Activated B cell treated with CpG ODN at 0.5 μM for 24 hours (primary cell): ENCODE measurements at regions of chr10 and their contacts with region 1.

Region 1: DNA sequence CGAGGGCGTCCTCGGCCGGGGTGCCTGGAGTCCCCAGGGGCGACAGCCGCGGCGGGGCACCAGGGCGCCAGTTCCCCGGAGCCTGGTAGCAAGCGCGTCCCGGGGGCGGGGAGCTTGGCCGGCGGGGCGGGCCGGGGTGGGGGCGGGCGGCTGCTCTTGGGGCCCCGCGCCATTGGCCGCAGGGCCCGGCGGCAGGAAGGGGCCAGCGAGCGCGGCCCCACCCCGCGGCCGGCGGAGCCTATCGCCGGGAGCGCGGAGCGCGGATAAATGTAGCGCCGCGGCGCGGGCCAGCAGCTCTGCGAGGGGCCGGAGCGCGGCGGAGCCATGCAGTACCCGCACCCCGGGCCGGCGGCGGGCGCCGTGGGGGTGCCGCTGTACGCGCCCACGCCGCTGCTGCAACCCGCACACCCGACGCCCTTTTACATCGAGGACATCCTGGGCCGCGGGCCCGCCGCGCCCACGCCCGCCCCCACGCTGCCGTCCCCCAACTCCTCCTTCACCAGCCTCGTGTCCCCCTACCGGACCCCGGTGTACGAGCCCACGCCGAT is at the start of gene HHEX:
- DNase-seq: peak; percentile 79
- ATAC-seq: peak; percentile 75
- H3K4me3 Mint-ChIP-seq: peak within 1 kb of the TSS; percentile 86
- H3K27ac Mint-ChIP-seq: peak within 1 kb of the TSS; percentile 92
- H3K4me1 Mint-ChIP-seq: peaks cover 45% of the 10 kb centered on the region
- H3K27me3 Mint-ChIP-seq: no peaks in the 10 kb centered on the region
- CTCF ChIP-seq: no peak
- total RNA-seq, gene HHEX: 50.3 and 55.1 TPM in 2 replicates

Region 2: GRCh38 chr10:92517034-92517655 is 172.6 kb before region 1 on chr10:
- CTCF ChIA-PET with region 1: no interaction called
- POLR2A ChIA-PET with region 1: no interaction called
- intact Hi-C with region 1: loop called (anchors 1 kb)
- DNase-seq: no peak
- ATAC-seq: peak; percentile 88
- H3K4me3 Mint-ChIP-seq: no peak overlapping the region
- H3K27ac Mint-ChIP-seq: no peak overlapping the region
- H3K4me1 Mint-ChIP-seq: peaks cover 6% of the 10 kb centered on the region
- H3K27me3 Mint-ChIP-seq: no peaks in the 10 kb centered on the region
- CTCF ChIP-seq: peak; percentile 30

Region 3: DNA sequence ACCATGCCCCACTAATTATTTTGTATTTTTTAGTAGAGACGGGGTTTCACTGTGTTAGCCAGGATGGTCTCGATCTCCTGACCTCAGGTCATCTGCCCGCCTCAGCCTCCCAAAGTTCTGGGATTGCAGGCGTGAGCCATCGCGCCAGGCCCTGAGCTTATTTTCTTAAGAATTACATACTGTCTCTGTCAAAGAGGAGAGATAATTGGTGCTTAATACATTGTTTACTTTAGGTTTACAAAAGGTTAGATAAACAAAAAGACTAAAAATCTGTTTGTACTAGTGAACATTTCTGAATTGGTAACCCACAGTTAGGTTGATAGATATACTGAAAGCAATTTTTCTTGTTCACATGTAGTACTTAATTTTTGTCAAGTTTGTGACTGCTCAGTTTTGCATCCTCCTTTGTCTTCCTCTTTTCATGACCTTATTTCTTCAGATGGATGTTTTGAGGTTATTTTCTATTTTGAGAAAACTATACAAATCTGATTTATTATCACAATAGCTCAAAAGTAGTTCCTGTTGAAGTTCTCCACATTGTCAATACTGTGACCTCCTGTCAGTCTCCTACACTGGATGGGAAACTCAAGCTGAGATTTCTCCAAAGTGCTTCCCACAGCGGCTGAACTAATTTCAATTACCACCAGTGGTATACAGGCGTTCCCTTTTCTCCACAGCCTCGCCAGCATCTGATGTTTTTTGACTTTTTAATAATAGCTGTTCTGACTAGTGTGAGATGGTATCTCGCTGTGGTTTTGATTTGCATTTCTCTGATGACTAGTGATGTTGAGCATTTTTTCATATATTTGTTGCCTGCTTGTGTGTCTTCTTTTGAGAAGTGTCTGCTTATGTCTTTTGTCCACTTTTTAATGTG is 22.5 kb after region 1 on chr10:
- CTCF ChIA-PET with region 1: interaction called, 3 read pairs
- POLR2A ChIA-PET with region 1: interaction called, 58 read pairs
- intact Hi-C with region 1: loop called (anchors 1 kb)
- DNase-seq: no peak
- ATAC-seq: peak; percentile 74
- H3K4me3 Mint-ChIP-seq: peak overlapping the region; percentile 60
- H3K27ac Mint-ChIP-seq: peak overlapping the region; percentile 85
- H3K4me1 Mint-ChIP-seq: peaks cover 65% of the 10 kb centered on the region
- H3K27me3 Mint-ChIP-seq: no peaks in the 10 kb centered on the region
- CTCF ChIP-seq: no peak

Region 4: GRCh38 chr10:92742331-92743228 is 52.8 kb after region 1 on chr10:
- CTCF ChIA-PET with region 1: no interaction called
- POLR2A ChIA-PET with region 1: interaction called, 105 read pairs
- intact Hi-C with region 1: loop called (anchors 1 kb)
- DNase-seq: peak; percentile 30
- ATAC-seq: peak; percentile 95
- H3K4me3 Mint-ChIP-seq: peak overlapping the region; percentile 78
- H3K27ac Mint-ChIP-seq: peak overlapping the region; percentile 95
- H3K4me1 Mint-ChIP-seq: peaks cover 79% of the 10 kb centered on the region
- H3K27me3 Mint-ChIP-seq: no peaks in the 10 kb centered on the region
- CTCF ChIP-seq: no peak

Region 5: DNA sequence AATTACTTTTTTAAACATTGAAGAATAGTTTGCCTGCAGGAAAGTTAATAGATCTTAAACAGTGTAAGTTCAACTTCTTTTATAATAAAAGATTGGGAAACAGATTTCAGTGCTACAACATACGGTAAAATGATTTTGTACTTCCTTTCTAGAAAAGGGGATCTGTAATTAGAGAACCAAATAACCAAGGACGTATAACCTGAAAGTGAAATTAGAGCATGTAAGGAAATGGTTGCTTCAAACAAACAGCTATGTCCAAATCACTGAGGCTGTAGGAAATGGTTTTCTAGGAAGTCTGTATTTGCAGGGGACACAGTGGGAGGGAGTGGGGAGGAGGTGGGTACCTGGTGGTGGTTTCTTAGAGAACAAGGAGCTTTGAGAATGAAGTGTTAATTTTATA is 100.7 kb after region 1 on chr10:
- CTCF ChIA-PET with region 1: interaction called, 4 read pairs
- POLR2A ChIA-PET with region 1: interaction called, 60 read pairs
- intact Hi-C with region 1: loop called (anchors 1 kb)
- DNase-seq: no peak
- ATAC-seq: peak; percentile 47
- H3K4me3 Mint-ChIP-seq: peak overlapping the region; percentile 63
- H3K27ac Mint-ChIP-seq: peak overlapping the region; percentile 92
- H3K4me1 Mint-ChIP-seq: peaks cover 45% of the 10 kb centered on the region
- H3K27me3 Mint-ChIP-seq: no peaks in the 10 kb centered on the region
- CTCF ChIP-seq: no peak

Region 6: DNA sequence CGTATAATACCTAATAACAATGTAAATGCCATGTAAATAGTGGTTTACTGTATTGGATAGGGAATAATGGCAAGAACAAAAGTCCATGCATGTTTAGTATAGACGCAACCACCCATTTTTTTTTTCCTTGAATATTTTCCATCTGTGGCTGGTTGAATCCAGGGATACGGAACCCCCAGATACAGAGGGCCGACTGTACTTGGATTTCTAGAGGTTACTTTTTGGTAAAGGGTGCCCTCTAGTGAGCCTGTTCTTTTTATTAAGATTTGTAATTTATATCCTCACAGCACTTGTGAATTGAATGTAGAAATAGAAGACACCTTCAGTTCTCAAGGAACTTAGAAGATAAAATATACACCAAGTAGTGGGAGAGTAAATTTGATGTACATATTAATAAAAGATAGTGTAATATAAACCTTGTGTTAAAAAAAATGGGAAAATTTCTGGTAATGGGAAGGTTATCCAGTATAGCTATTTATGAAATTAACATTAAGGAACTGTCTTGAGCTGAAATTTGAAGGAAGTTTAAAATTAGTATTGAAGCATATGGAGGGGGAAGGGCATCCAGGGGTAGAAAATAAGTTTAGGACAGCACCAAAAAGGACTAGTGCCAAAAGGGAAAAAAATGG is 190.6 kb after region 1 on chr10:
- CTCF ChIA-PET with region 1: interaction called, 3 read pairs
- POLR2A ChIA-PET with region 1: no interaction called
- intact Hi-C with region 1: loop called (anchors 1 kb)
- DNase-seq: no peak
- ATAC-seq: peak; percentile 70
- H3K4me3 Mint-ChIP-seq: no peak overlapping the region
- H3K27ac Mint-ChIP-seq: no peak overlapping the region
- H3K4me1 Mint-ChIP-seq: peaks cover 23% of the 10 kb centered on the region
- H3K27me3 Mint-ChIP-seq: no peaks in the 10 kb centered on the region
- CTCF ChIP-seq: no peak